ENCODE measurements at regions of chr1 and their contacts with region 1.

Region 1: GRCh38 chr1:233005703-233006102 is 55.3 kb downstream of the NTPCR start:
- DNase-seq: peak in 1 of 2 donors; percentile 75
- H3K4me3 ChIP-seq: no peak overlapping the region
- CTCF ChIP-seq: no peak
- POLR2A ChIP-seq: no peak

Region 2: DNA sequence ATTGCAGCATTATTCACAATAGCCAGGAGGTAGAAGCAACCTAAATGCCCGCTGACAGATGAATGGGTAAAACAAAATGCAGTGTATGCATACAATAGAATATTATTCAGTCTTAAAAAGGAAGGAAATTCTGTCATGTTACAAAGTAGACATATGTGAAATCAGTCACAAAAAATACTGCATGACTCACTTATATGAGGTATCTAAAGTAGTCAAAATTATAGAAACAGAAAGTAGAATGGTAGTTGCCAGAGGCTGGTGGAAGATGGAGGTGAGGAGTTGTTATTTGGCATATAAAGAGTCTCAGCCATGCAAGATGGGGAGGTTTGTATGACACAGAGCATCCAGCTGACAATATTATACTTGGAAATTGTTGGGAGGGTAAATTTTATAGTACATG is 1540.7 kb before region 1 on chr1:
- intact Hi-C with region 1: no loop called
- DNase-seq: no peak
- H3K4me3 ChIP-seq: no peak overlapping the region
- CTCF ChIP-seq: no peak
- POLR2A ChIP-seq: no peak

Region 3: DNA sequence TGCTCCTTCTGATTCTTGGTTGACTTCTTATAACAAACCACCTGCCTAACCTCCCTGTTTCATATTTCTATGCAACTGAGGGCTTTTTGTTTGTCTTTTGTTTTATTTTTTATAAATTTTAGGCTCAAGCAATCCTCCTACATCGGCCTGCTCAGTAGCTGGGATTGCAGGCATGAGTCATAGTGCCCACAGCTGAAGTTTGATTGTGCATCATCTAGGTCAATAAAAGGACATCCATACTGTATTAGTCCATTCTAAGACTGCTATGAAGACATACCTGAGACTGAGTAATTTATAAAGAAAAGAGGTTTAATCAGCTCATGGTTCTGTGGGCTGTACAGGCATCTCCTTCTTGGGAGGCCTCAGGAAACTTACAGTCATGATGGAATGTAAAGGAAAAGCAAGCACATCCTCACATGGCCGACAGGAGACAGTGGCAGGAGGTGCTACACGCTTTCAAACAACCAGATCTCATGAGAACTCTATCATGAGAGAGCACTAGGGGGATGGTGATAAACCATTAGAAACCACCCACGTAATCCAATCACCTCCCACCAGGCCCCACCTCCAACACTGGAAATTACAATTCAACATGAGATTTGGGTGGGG is 660.8 kb before region 1 on chr1:
- intact Hi-C with region 1: no loop called
- DNase-seq: no peak
- H3K4me3 ChIP-seq: no peak overlapping the region
- CTCF ChIP-seq: no peak
- POLR2A ChIP-seq: no peak

Region 4: GRCh38 chr1:233057836-233058235 is 52.1 kb after region 1 on chr1:
- intact Hi-C with region 1: loop called (anchors 2 kb)
- DNase-seq: no peak
- H3K4me3 ChIP-seq: no peak overlapping the region
- CTCF ChIP-seq: no peak
- POLR2A ChIP-seq: no peak